ENCODE measurements at regions of chr18 and their contacts with region 1.

Region 1: GRCh38 chr18:22223254-22223960 is 54.0 kb downstream of the GATA6 start:
- DNase-seq: peak; percentile 36
- ATAC-seq: peak; percentile 77
- H3K4me3 ChIP-seq: peak overlapping the region in 1 of 3 experiments; percentile 19; a peak in 1 of 6 replicates
- H3K27ac ChIP-seq: no peak overlapping the region
- H3K4me1 ChIP-seq: peaks cover 17% of the 10 kb centered on the region
- H3K27me3 ChIP-seq: 0 out of 5 replicates have a peak, but pooled peaks cover 0 to 5% of the 10 kb centered on the region in 2 experiments
- CTCF ChIP-seq: no peak
- EP300 ChIP-seq: no peak
- POLR2A ChIP-seq: no peak
- RAD21 ChIP-seq: no peak

Region 2: GRCh38 chr18:21960189-21960588 is 263.2 kb before region 1 on chr18:
- CTCF ChIA-PET with region 1: no interaction called
- POLR2A ChIA-PET with region 1: no interaction called
- in situ Hi-C with region 1: no loop called
- intact Hi-C with region 1: no loop called
- DNase-seq: no peak
- ATAC-seq: no peak
- H3K4me3 ChIP-seq: no peak overlapping the region
- H3K27ac ChIP-seq: no peak overlapping the region
- H3K4me1 ChIP-seq: peaks cover 15% of the 10 kb centered on the region
- H3K27me3 ChIP-seq: no peaks in the 10 kb centered on the region; a peak in 1 of 5 replicates
- CTCF ChIP-seq: no peak
- EP300 ChIP-seq: no peak
- POLR2A ChIP-seq: no peak
- RAD21 ChIP-seq: no peak

Region 3: DNA sequence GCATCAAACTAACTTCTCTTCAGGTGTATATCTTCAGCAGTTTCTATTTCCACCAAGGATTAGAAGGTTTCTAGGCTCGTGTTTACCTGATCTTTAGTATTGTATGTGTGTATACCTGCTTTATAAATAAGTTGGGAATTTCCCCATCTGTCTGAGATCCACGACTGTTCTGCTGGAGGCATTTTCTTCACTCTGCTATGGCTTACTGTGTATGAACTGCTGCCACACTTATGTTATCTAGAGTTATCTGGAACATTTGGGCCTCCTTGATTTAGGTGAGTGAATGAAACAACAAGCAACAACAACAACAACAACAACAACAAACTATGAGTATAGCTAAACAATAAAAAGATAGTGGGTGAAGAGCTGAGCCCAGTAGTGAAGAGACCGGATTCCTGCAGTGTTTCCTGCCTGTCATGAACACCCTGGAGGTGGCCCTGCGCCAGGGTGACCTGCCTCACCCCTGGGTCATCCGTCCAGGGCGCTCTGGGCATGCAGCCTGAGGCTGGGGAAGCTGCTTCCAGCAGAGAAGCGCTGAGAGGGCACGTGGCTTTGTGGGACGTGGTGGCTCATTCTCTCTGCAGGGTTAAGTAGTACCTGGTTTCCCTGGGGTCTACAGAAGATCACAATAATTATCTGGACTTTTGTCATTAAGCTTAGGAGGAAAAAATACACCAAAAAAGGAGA is 110.1 kb before region 1 on chr18:
- CTCF ChIA-PET with region 1: no interaction called
- POLR2A ChIA-PET with region 1: no interaction called
- in situ Hi-C with region 1: no loop called
- intact Hi-C with region 1: loop called (anchors 10 kb)
- DNase-seq: peak; percentile 21
- ATAC-seq: peak; percentile 88
- H3K4me3 ChIP-seq: no peak overlapping the region
- H3K27ac ChIP-seq: no peak overlapping the region
- H3K4me1 ChIP-seq: peaks cover 42% of the 10 kb centered on the region
- H3K27me3 ChIP-seq: peaks cover 0 to 5% of the 10 kb centered on the region in 2 experiments; a peak in 1 of 5 replicates
- CTCF ChIP-seq: no peak
- EP300 ChIP-seq: no peak
- POLR2A ChIP-seq: no peak
- RAD21 ChIP-seq: no peak

Region 4: DNA sequence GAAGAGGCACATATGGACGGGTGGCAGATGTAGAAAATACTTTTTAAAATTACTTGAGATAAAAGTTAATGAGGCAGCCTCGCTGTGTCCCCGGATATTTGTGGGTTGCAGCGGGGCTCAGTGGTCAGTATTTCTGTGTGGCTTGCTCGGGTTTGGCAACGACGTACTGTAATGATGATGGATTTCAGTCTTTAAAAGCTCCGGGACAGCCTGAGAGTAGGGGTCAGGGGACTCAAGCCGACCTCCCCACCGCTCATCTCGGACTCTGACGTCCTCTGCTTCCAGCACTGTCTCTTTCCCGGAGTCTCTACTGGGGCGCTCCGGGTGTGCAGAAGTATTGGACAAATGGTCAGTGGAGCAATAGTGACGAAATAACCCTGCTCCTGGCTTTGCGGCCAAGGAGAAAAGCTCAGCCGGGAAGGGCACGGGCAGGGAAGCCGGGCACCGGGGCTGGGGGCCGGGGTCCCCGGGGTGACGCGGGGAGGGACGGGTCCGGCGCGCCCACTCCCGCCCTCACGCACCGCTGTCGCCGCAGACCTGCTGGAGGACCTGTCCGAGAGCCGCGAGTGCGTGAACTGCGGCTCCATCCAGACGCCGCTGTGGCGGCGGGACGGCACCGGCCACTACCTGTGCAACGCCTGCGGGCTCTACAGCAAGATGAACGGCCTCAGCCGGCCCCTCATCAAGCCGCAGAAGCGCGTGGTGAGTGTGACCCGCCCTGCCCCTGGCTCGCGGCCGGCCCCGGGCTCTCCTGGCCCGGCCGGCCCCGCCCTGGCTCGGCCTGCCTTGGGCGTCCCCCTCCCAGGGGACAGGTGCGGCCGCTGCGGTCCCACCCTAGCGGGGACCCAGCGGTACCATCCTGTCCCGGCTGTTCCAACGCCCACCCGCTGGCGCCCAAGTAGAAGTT is 46.7 kb before region 1 on chr18:
- CTCF ChIA-PET with region 1: no interaction called
- POLR2A ChIA-PET with region 1: no interaction called
- in situ Hi-C with region 1: no loop called
- intact Hi-C with region 1: no loop called
- DNase-seq: no peak
- ATAC-seq: no peak
- H3K4me3 ChIP-seq: no peak overlapping the region
- H3K27ac ChIP-seq: no peak overlapping the region
- H3K4me1 ChIP-seq: peaks cover 36% of the 10 kb centered on the region
- H3K27me3 ChIP-seq: no peaks in the 10 kb centered on the region
- CTCF ChIP-seq: no peak
- EP300 ChIP-seq: no peak
- POLR2A ChIP-seq: no peak
- RAD21 ChIP-seq: no peak

Region 5: DNA sequence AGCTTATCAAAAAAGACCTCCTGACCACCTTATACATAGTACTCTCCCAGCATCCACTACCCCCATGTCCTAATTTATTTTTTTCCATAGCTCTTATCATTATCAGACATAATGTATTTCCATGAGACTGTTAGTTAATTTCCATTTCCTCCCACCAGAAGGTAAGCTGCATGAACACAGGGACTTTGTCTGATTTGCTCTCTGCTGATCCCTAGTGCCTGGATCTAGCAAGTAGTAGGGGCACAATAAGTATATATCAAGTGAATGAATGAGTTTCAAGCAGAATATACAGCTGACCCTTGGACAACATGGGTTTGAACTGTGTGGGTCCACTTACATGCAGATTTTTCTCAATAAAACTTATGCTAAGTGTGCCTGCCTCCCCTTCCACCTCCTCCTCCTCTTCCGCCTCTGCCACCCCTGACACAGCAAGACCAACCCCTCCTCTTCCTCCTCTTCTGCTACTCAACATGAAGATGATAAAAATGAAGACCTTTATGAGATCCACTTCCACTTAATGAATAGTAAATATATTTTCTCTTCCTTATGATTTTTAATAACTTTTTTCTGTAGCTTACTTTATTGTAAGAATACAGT is 140.6 kb after region 1 on chr18:
- CTCF ChIA-PET with region 1: no interaction called
- POLR2A ChIA-PET with region 1: no interaction called
- in situ Hi-C with region 1: no loop called
- intact Hi-C with region 1: no loop called
- DNase-seq: no peak
- ATAC-seq: no peak
- H3K4me3 ChIP-seq: no peak overlapping the region
- H3K27ac ChIP-seq: no peak overlapping the region
- H3K4me1 ChIP-seq: no peaks in the 10 kb centered on the region
- H3K27me3 ChIP-seq: no peaks in the 10 kb centered on the region; a peak in 1 of 5 replicates
- CTCF ChIP-seq: no peak
- EP300 ChIP-seq: no peak
- POLR2A ChIP-seq: no peak
- RAD21 ChIP-seq: no peak